IMR-90 (cell line): ENCODE measurements at regions of chr22 and their contacts with region 1.

Region 1: DNA sequence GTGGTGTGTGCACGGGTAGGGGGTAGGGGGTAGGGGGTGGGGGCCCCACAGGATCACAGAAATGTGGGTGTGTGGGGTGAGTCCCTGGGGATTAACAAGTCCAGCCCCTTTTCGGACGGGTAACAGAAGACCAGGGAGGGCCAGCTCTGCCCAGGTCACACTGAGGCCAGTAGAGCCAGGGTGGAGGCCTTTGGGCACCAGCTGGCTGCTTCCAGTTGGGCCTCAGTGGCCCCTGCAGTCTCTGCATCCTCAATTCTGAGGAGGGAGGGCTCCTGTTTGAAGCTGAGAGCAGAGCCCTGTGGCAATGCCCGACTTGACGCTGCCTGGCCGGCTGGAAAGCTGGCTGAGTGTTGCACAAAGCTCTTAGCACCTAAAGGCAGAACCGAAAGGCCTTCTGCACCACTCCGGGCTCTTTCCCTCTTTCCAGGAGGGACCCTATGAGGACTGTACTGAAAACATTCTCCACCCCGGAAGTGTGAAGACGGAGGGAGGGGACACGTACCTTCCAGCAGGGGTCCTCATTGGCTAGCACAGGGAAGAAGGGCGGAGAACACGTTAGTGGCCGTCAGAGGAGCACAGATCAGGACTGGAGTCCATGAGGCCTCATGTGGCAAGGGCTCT is 120.4 kb downstream of the PHF21B start:
- DNase-seq: no peak
- ATAC-seq: no peak
- H3K4me3 ChIP-seq: no peak overlapping the region
- H3K27ac ChIP-seq: no peak overlapping the region
- H3K4me1 ChIP-seq: no peaks in the 10 kb centered on the region
- H3K27me3 ChIP-seq: peaks cover 3% of the 10 kb centered on the region; the same call in 1 of the 2 replicates
- CTCF ChIP-seq: no peak
- POLR2A ChIP-seq: no peak
- RAD21 ChIP-seq: no peak

Region 2: GRCh38 chr22:44671742-44672141 is 217.6 kb before region 1 on chr22:
- CTCF ChIA-PET with region 1: no interaction called
- POLR2A ChIA-PET with region 1: no interaction called
- dilution Hi-C with region 1: no loop called
- in situ Hi-C with region 1: no loop called
- intact Hi-C with region 1: no loop called
- DNase-seq: peak; percentile 83
- ATAC-seq: no peak
- H3K4me3 ChIP-seq: no peak overlapping the region
- H3K27ac ChIP-seq: no peak overlapping the region
- H3K4me1 ChIP-seq: peaks cover 17% of the 10 kb centered on the region; the same call in 1 of the 2 replicates
- H3K27me3 ChIP-seq: no peaks in the 10 kb centered on the region; the same call in 1 of the 2 replicates
- CTCF ChIP-seq: no peak
- POLR2A ChIP-seq: no peak
- RAD21 ChIP-seq: no peak

Region 3: GRCh38 chr22:44828193-44828592 is 61.2 kb before region 1 on chr22:
- CTCF ChIA-PET with region 1: no interaction called
- POLR2A ChIA-PET with region 1: no interaction called
- dilution Hi-C with region 1: no loop called
- in situ Hi-C with region 1: loop called (anchors 10 kb)
- intact Hi-C with region 1: no loop called
- DNase-seq: no peak
- ATAC-seq: peak; percentile 64; the same call in 1 of the 2 replicates
- H3K4me3 ChIP-seq: no peak overlapping the region
- H3K27ac ChIP-seq: no peak overlapping the region
- H3K4me1 ChIP-seq: no peaks in the 10 kb centered on the region
- H3K27me3 ChIP-seq: peaks cover 4% of the 10 kb centered on the region; the same call in 1 of the 2 replicates
- CTCF ChIP-seq: peak; percentile 38
- POLR2A ChIP-seq: no peak
- RAD21 ChIP-seq: peak; percentile 25; the same call in 1 of the 2 replicates